CD14-positive monocyte (primary cell): ENCODE measurements at regions of chr7 and their contacts with region 1.

Region 1: GRCh38 chr7:135558337-135558767 is 635 bp downstream of the NUP205 start:
- DNase-seq: peak; percentile 57 to 63 (median 59)
- H3K4me3 ChIP-seq: peak overlapping the region; percentile 80 to 96 (median 89)
- H3K4me3 Mint-ChIP-seq: no peak overlapping the region
- H3K27ac ChIP-seq: peak overlapping the region; percentile 84 to 98
- H3K27ac Mint-ChIP-seq: no peak overlapping the region
- H3K4me1 ChIP-seq: peaks cover 6 to 17% of the 10 kb centered on the region in 2 donors
- H3K4me1 Mint-ChIP-seq: peaks cover 25% of the 10 kb centered on the region
- H3K27me3 ChIP-seq: no peaks in the 10 kb centered on the region
- H3K27me3 Mint-ChIP-seq: no peaks in the 10 kb centered on the region
- CTCF ChIP-seq: peak; percentile 55

Region 2: DNA sequence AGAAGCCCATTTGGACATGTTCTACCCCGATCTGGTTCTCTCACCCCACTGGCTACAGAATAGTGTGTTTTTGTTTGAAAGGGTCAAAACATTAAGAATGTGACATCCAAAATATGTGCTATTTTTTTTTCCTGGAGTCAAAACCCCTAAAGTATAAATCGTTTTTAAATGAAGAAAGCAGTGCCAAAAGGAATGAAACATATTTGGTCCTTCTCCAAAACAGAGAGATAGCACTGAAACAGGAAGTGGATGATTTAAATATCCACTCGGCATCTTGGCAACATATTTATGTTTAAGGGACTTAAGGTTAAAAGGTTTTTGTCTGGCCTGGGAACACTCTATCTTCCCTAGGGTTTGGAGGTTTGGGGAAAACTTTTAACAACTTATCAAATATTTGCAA is 746.6 kb before region 1 on chr7:
- intact Hi-C with region 1: no loop called
- DNase-seq: no peak
- H3K4me3 ChIP-seq: no peak overlapping the region
- H3K4me3 Mint-ChIP-seq: no peak overlapping the region
- H3K27ac ChIP-seq: no peak overlapping the region
- H3K27ac Mint-ChIP-seq: no peak overlapping the region
- H3K4me1 ChIP-seq: no peaks in the 10 kb centered on the region
- H3K4me1 Mint-ChIP-seq: no peaks in the 10 kb centered on the region
- H3K27me3 ChIP-seq: no peaks in the 10 kb centered on the region
- H3K27me3 Mint-ChIP-seq: peaks cover 0 to 3% (median 1%) of the 10 kb centered on the region in 3 donors
- CTCF ChIP-seq: no peak

Region 3: GRCh38 chr7:135509903-135510602 is 48.3 kb before region 1 on chr7 and contains the start of gene CNOT4:
- intact Hi-C with region 1: loop called (anchors 2 kb)
- DNase-seq: peak; percentile 95 to 97 (median 96)
- H3K4me3 ChIP-seq: peak within 1 kb of the TSS; percentile 82 to 99 (median 87)
- H3K4me3 Mint-ChIP-seq: no peak within 1 kb of the TSS
- H3K27ac ChIP-seq: peak within 1 kb of the TSS; percentile 91 to 98
- H3K27ac Mint-ChIP-seq: no peak within 1 kb of the TSS
- H3K4me1 ChIP-seq: peaks cover 21 to 31% of the 10 kb centered on the region in 2 donors
- H3K4me1 Mint-ChIP-seq: peaks cover 9% of the 10 kb centered on the region
- H3K27me3 ChIP-seq: no peaks in the 10 kb centered on the region
- H3K27me3 Mint-ChIP-seq: peaks cover 0 to 2% (median 0%) of the 10 kb centered on the region in 3 donors
- CTCF ChIP-seq: no peak
- polyA plus RNA-seq, gene CNOT4: 4.3 to 7.9 (median 6.3) TPM